ENCODE measurements at regions of chr7 and their contacts with region 1.

Region 1: GRCh38 chr7:56063882-56064625 is at the start of gene SUMF2:
- DNase-seq: peak; percentile 92
- H3K4me3 Mint-ChIP-seq: peak within 1 kb of the TSS; percentile 87
- H3K27ac Mint-ChIP-seq: peak within 1 kb of the TSS; percentile 86
- H3K4me1 Mint-ChIP-seq: peaks cover 40% of the 10 kb centered on the region
- H3K27me3 Mint-ChIP-seq: peaks cover 1% of the 10 kb centered on the region
- total RNA-seq, gene SUMF2: 130 to 133 TPM

Region 2: DNA sequence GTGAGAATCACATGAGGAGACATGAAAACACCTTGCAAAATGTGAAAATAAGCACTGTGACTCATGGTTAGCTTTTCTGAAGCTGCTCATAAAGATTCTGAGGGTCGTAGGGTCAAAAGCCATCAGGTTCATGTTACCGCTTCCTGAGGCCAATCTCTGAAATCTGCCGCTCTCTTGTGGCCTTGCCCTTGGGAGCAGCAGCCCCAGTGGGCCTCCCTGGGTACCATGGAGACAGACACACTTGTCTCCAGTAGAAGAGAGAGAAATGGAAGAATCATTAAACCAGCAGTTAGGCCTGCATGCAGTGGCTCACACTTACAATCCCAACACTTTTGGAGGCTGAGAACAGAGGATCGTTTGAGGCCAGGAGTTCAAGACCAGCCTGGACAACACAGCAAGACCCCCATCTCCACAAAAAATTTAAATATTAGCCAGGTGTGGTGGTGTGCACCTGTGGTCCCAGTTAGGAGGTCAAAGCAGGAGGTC is 56.8 kb before region 1 on chr7:
- CTCF ChIA-PET with region 1: interaction called, 5 read pairs
- POLR2A ChIA-PET with region 1: no interaction called
- intact Hi-C with region 1: loop called (anchors 2 kb)
- DNase-seq: peak; percentile 17
- H3K4me3 Mint-ChIP-seq: no peak overlapping the region
- H3K27ac Mint-ChIP-seq: no peak overlapping the region
- H3K4me1 Mint-ChIP-seq: no peaks in the 10 kb centered on the region
- H3K27me3 Mint-ChIP-seq: no peaks in the 10 kb centered on the region

Region 3: GRCh38 chr7:56092789-56093531 is 28.9 kb after region 1 on chr7 and contains the start of gene PHKG1:
- CTCF ChIA-PET with region 1: no interaction called
- POLR2A ChIA-PET with region 1: no interaction called
- intact Hi-C with region 1: no loop called
- DNase-seq: no peak
- H3K4me3 Mint-ChIP-seq: no peak within 1 kb of the TSS
- H3K27ac Mint-ChIP-seq: no peak within 1 kb of the TSS
- H3K4me1 Mint-ChIP-seq: no peaks in the 10 kb centered on the region
- H3K27me3 Mint-ChIP-seq: no peaks in the 10 kb centered on the region
- total RNA-seq, gene PHKG1: 2.4 to 3.0 TPM

Measured in activated CD4-positive, alpha-beta memory T cell treated with anti-CD3 and anti-CD28 coated beads for 36 hours (primary cell).